Ovary (tissue), 10 donors: ENCODE measurements at regions of chr2 and their contacts with region 1.

Region 1: GRCh38 chr2:573805-574392 is 103.3 kb downstream of the TMEM18 start:
- DNase-seq: no peak
- H3K4me3 ChIP-seq: no peak overlapping the region
- H3K27ac ChIP-seq: no peak overlapping the region
- H3K4me1 ChIP-seq: no peaks in the 10 kb centered on the region
- H3K27me3 ChIP-seq: no peaks in the 10 kb centered on the region
- CTCF ChIP-seq: no peak
- EP300 ChIP-seq: no peak
- POLR2A ChIP-seq: no peak

Region 2: GRCh38 chr2:833180-833579 is 259.3 kb after region 1 on chr2:
- intact Hi-C with region 1: loop called in 1 of 4 experiments (anchors 5 kb)
- DNase-seq: no peak
- H3K4me3 ChIP-seq: no peak overlapping the region
- H3K27ac ChIP-seq: no peak overlapping the region
- H3K4me1 ChIP-seq: no peaks in the 10 kb centered on the region
- H3K27me3 ChIP-seq: no peaks in the 10 kb centered on the region
- CTCF ChIP-seq: no peak
- EP300 ChIP-seq: no peak
- POLR2A ChIP-seq: no peak